ENCODE measurements at regions of chr17 and their contacts with region 1.

Region 1: DNA sequence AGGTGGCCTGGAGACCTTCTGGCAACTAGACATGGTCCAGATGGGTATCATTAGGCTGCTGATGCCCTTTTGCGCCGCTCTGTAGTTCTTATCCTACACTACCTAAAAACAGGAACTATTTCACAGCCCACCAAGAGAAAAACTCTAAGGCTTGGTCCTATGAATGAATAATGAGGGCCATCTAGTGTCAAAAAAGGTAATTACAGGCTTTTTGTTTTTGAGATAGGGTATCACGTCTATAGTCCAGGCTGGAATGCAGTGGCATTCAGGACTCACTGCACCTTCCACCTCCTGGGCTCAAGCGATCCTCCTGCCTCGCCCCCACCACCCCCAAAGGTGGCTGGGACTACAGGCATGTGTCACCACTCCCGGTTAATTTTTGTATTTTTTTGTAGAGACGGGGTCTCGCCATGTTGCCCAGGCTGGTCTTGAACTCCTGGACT is 20.9 kb downstream of the COIL start:
- DNase-seq: peak; percentile 70
- H3K4me3 Mint-ChIP-seq: no peak overlapping the region
- H3K27ac Mint-ChIP-seq: peak overlapping the region; percentile 63
- H3K4me1 Mint-ChIP-seq: peaks cover 19% of the 10 kb centered on the region
- H3K27me3 Mint-ChIP-seq: no peaks in the 10 kb centered on the region

Region 2: DNA sequence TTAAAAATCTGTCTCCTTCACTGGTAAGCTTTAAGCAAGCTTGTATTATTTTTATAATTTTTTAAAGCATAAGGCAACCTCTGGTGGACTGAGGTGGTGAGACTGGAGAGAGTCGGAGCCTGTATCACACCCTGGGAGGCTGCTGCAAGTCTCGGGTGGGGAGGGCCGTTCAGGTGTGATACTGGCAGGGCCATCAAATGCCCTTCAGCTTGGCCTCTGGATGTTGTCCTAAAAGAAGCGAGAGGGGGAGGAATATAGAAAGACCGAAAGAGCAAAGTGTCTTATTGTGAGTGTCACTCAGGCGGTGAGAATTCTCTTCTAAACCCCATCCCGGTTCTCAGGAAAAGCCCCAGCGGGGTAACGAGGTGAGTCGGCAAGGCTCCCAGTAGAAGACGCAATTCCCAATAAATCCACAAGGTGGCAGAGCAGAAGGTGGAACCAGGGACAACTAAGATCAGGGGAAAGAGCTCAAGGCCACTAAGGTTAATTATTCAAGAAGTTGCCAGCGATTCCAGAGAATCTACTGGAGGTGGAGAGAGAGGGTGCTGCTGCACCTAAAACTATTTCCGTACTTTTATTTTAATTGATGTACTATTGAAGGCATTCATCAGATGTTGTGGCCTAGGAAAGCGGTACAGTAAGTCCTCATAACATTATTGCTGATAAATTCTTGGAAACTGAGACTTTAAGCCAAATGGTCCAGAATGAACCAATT is 120.3 kb before region 1 on chr17:
- intact Hi-C with region 1: loop called (anchors 1 kb)
- DNase-seq: peak; percentile 93
- H3K4me3 Mint-ChIP-seq: no peak overlapping the region
- H3K27ac Mint-ChIP-seq: peak overlapping the region; percentile 44
- H3K4me1 Mint-ChIP-seq: peaks cover 9% of the 10 kb centered on the region
- H3K27me3 Mint-ChIP-seq: no peaks in the 10 kb centered on the region

Region 3: DNA sequence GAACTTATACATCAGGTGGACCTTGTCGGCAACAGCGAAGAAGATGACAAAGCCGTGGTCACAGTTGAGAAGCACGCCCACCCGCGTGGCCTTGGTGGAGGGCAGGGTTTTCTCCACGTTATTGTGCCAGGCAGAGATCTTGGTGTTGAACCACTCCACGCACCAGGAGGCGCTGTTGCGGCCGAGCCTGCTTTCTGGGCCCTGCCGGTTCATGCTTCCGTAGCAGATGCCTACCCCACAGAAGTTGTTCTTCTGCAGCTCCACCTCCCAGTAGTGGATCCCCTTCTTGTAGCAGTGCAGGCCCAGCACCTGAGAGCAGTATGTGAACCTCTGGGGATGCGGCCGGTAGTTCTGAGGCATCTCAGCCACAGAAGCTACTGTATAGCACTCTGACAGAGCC is 48.1 kb before region 1 on chr17:
- intact Hi-C with region 1: loop called (anchors 1 kb)
- DNase-seq: peak; percentile 83
- H3K4me3 Mint-ChIP-seq: no peak overlapping the region
- H3K27ac Mint-ChIP-seq: no peak overlapping the region
- H3K4me1 Mint-ChIP-seq: peaks cover 14% of the 10 kb centered on the region
- H3K27me3 Mint-ChIP-seq: no peaks in the 10 kb centered on the region